Posterior cingulate gyrus (tissue), 11 donors: ENCODE measurements at regions of chr5 and their contacts with region 1.

Region 1: GRCh38 chr5:173963867-173964441 is 25.0 kb upstream of the C5orf47 start:
- DNase-seq: peak in 5 of 10 donors; percentile 39 to 92 (median 69)

Region 2: GRCh38 chr5:173771121-173771724 is 192.7 kb before region 1 on chr5:
- intact Hi-C with region 1: no loop called
- DNase-seq: no peak

Region 3: DNA sequence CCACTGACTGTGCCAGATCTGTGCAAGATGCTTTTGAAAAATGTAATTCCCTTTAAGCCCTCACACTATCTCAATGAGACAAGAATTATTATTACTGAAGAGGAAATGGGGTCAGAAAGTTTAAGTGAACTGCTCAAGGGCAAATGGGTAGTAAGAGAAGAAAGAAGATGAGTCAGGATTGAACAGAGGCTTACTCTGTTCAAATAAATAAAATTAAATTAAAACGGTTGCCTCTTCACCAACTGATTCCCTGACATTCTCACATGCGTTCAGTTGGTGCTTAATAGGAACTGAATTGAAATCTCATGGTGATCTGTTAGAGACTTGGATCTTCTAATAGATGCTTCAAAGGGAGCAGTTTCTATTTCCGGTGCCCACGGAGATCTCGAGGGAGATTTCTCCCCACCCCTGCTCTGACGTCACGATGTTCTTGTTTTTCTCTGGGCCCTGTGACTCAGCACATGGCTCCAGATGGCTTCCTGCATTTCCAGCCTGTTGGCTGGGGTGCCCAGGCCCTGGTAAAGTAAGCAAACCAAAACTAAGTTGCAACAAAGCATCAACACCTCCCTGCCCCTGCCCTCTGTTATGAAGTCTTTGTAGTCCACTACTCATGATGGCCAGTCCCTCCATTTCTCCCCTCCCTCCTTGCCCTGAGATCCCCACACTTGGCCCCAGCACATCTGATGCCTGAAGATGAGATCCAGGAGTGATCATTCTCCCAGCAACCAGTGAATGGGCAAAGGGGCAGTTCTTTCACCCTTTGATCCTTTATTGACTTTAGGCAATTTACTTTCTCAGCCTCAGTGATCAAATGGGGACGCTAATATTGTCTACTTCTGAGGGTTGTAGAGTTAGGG is 181.9 kb before region 1 on chr5:
- intact Hi-C with region 1: loop called (anchors 10 kb)
- DNase-seq: peak; percentile 64 to 96 (median 80)

Region 4: DNA sequence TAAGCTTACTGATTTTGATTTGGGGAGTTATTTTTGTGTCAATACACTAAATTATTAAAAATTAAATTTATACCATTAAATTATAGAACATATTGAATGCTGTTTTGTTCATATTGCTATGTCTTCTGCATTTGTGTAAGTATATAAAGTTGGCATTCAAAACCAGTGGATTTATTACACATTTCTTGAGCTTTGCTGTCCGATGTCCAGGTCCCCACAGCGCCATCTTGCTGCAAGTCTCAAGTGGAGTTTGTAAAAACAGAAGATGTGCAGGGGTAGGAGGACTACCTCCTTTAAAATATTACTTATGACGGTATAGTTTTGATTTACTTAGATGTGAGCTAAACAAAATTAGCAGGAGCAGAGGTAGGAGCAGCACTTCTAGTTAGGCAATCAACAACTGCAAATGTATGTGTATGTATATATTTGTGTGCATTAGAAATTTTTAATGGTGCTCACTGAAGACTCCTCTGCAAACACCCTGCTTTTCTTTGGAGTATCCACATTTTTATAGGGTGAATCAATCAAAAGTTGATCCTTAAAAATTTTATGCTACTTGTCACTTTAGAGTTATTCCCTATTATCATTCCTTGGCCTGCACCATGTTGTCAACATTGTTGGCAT is 38.4 kb before region 1 on chr5:
- intact Hi-C with region 1: loop called (anchors 5 kb)
- DNase-seq: peak; percentile 25 to 89 (median 59)

Region 5: GRCh38 chr5:174755103-174755502 is 791.1 kb after region 1 on chr5:
- intact Hi-C with region 1: no loop called
- DNase-seq: no peak